H1 (cell line): ENCODE measurements at regions of chr5 and their contacts with region 1.

Region 1: DNA sequence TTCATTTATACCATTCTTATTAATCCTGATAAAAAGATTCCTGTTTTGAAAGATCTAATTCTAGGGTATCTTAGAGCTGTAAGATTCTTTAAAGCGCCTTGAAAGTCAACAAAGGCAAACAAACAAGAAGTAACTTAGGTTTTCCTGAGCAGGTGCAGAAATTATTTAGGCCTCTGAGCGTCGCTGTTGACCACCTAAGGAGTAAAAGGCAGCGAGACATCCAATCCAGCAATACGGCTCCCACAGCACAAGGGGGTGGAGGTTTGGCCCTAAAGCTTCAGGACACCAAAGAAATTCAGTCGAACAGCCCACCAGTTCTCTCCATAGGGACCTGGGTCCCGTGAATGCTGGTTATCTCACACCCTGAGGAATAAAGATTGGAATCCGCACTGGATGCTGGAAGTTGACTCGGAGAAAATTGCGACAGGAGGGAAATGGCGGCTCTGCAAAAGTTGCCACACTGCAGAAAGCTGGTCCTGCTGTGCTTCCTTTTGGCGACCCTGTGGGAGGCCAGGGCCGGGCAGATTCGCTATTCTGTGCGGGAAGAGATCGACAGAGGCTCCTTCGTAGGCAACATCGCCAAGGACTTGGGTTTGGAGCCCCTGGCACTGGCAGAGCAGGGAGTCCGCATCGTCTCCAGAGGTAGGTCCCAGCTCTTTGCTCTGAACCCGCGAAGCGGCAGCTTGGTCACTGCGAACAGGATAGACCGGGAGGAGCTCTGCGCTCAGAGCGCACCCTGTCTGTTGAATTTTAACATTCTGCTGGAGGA is at the start of gene PCDHGA2:
- DNase-seq: no peak
- H3K4me3 ChIP-seq: no peak within 1 kb of the TSS
- H3K27ac ChIP-seq: no peak within 1 kb of the TSS
- H3K4me1 ChIP-seq: no peaks in the 10 kb centered on the region
- H3K27me3 ChIP-seq: no peaks in the 10 kb centered on the region
- CTCF ChIP-seq: peak; percentile 10 to 77 (median 60)
- EP300 ChIP-seq: no peak
- POLR2A ChIP-seq: no peak
- RAD21 ChIP-seq: peak; percentile 58 to 65
- total RNA-seq, gene PCDHGA2: 0.31 and 0.32 TPM in 2 replicates

Region 2: DNA sequence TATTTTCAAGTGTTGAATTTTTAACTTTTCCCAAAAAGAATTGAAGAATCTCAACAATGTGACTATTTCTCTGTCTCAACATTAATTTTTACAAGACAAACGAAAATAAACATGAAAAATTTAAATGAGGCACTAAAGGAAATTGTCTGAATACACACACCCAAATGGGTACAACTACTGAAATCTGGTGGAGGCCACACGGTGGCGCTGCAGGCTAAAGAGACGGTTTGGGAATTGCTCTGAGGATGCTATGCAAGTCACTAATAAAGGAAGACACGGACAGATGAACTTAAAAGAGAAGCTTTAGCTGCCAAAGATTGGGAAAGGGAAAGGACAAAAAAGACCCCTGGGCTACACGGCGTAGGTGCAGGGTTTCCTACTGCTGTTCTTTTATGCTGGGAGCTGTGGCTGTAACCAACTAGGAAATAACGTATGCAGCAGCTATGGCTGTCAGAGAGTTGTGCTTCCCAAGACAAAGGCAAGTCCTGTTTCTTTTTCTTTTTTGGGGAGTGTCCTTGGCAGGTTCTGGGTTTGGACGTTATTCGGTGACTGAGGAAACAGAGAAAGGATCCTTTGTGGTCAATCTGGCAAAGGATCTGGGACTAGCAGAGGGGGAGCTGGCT is 146.5 kb before region 1 on chr5 and contains the start of gene PCDHB10:
- CTCF ChIA-PET with region 1: interaction called, 10 read pairs
- POLR2A ChIA-PET with region 1: no interaction called
- DNase-seq: peak in 1 of 2 experiments; percentile 92
- H3K4me3 ChIP-seq: peak within 1 kb of the TSS; percentile 14 to 46 (median 35); a peak in 6 of 8 replicates
- H3K27ac ChIP-seq: no peak within 1 kb of the TSS
- H3K4me1 ChIP-seq: no peaks in the 10 kb centered on the region; a peak in 1 of 7 replicates
- H3K27me3 ChIP-seq: no peaks in the 10 kb centered on the region
- CTCF ChIP-seq: peak; percentile 72 to 83 (median 83)
- EP300 ChIP-seq: no peak
- POLR2A ChIP-seq: no peak
- RAD21 ChIP-seq: peak; percentile 82 to 84
- total RNA-seq, gene PCDHB10: 1.8 and 1.9 TPM in 2 replicates

Region 3: DNA sequence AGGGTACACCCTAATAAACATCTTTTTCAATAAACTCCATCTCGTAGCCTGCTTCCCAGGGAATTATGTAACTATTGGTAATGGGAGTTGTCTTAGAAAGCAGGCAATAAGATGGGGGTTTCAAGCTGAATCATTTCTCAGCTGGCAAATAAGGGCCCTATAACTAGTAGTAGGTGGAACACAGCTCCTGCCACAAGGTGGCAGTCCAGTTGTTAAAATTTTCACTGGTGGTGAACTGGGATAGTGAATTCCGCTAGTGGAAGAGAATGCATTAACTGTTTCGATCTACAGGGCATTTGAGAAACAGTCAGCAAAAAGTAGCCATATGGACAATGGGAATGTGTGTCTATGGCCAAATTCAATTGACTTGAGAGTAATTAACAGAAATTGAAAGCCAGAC is 65.8 kb before region 1 on chr5:
- CTCF ChIA-PET with region 1: interaction called, 17 read pairs
- POLR2A ChIA-PET with region 1: no interaction called
- DNase-seq: peak; percentile 3 to 44
- H3K4me3 ChIP-seq: no peak overlapping the region
- H3K27ac ChIP-seq: no peak overlapping the region
- H3K4me1 ChIP-seq: no peaks in the 10 kb centered on the region
- H3K27me3 ChIP-seq: no peaks in the 10 kb centered on the region
- CTCF ChIP-seq: peak in 2 of 3 experiments; percentile 41 to 49; a peak in 2 of 4 replicates
- EP300 ChIP-seq: no peak
- POLR2A ChIP-seq: no peak
- RAD21 ChIP-seq: peak; percentile 37 to 49; a peak in 3 of 4 replicates

Region 4: GRCh38 chr5:141326088-141326854 is 12.5 kb before region 1 on chr5:
- CTCF ChIA-PET with region 1: interaction called, 40 read pairs
- POLR2A ChIA-PET with region 1: interaction called, 15 read pairs
- DNase-seq: peak in 1 of 2 experiments; percentile 73
- H3K4me3 ChIP-seq: peak overlapping the region; percentile 31 to 54 (median 50)
- H3K27ac ChIP-seq: no peak overlapping the region
- H3K4me1 ChIP-seq: no peaks in the 10 kb centered on the region
- H3K27me3 ChIP-seq: no peaks in the 10 kb centered on the region
- CTCF ChIP-seq: peak; percentile 58 to 74 (median 71)
- EP300 ChIP-seq: no peak
- POLR2A ChIP-seq: peak in 1 of 2 experiments; percentile 56; a peak in 1 of 3 replicates
- RAD21 ChIP-seq: peak; percentile 47 to 63

Region 5: DNA sequence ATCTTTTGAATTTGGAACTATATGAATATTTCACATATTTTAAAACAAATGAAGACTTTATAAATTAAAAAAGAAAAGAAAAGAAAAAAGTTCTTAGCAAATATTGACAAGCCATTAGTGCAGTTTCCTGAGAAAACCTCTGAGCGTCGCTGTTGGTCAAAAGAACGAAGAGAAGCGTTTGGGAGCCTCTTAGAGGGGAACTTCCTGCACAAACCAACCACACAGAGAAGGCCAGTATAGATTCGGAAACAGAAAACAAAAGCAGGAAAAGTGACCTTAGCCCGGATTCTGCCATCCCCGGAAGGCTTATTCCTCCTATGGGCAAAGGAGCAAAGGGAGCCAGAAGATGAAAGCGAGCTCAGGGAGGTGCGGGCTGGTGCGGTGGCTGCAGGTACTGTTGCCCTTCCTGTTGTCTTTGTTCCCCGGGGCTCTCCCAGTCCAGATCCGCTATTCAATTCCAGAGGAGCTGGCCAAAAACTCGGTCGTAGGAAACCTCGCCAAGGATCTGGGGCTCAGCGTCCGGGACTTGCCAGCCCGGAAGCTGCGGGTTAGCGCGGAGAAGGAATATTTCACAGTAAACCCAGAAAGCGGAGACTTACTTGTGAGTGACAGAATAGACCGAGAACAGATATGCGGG is 21.2 kb after region 1 on chr5 and contains the start of gene PCDHGB2:
- CTCF ChIA-PET with region 1: interaction called, 14 read pairs
- POLR2A ChIA-PET with region 1: no interaction called
- DNase-seq: no peak
- H3K4me3 ChIP-seq: peak within 1 kb of the TSS in 1 of 4 experiments; percentile 33; a peak in 1 of 8 replicates
- H3K27ac ChIP-seq: no peak within 1 kb of the TSS
- H3K4me1 ChIP-seq: peaks cover 0 to 3% (median under 1%) of the 10 kb centered on the region in 4 experiments; a peak in 1 of 7 replicates
- H3K27me3 ChIP-seq: no peaks in the 10 kb centered on the region
- CTCF ChIP-seq: peak in 2 of 3 experiments; percentile 60 to 74; a peak in 3 of 4 replicates
- EP300 ChIP-seq: no peak
- POLR2A ChIP-seq: no peak
- RAD21 ChIP-seq: peak; percentile 78 to 82
- total RNA-seq, gene PCDHGB2: 2.8 and 2.9 TPM in 2 replicates

Region 6: DNA sequence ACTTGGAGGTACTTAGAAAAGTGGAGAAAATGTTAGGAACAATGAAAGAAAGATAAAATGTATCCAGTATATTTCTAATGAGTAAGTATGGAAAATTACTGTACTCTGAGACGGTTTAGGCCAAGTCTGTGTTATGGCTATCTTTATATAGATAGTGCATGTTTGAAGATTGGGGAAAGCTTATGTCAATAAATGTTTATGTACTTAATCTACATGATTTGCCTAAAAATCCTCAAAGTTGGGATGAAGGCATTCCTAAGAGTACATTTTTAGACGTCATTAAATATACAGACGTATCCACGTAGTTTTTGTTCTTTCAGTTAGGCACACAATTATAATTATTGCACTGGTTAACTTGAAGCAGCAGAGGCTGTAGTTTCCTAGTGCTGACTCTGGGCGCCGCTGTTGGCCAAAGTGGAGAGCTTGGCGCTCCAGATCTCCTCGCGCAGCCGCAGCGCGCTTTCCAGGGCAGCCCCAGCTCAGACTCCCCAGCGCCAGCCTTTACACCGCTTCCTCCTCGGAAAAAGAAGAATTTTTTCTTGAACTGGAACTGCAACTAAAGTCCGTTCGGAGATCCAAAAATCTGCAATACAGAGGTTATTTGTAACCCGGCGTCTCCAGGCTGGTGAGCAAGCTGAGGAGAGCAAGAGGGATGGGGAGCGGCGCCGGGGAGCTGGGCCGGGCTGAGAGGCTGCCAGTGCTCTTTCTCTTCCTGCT is 48.7 kb after region 1 on chr5 and contains the start of gene PCDHGB4:
- CTCF ChIA-PET with region 1: interaction called, 16 read pairs
- POLR2A ChIA-PET with region 1: no interaction called
- DNase-seq: peak in 1 of 2 experiments; percentile 82
- H3K4me3 ChIP-seq: peak within 1 kb of the TSS; percentile 42 to 69 (median 44); a peak in 7 of 8 replicates
- H3K27ac ChIP-seq: no peak within 1 kb of the TSS
- H3K4me1 ChIP-seq: no peaks in the 10 kb centered on the region
- H3K27me3 ChIP-seq: no peaks in the 10 kb centered on the region; a peak in 1 of 7 replicates
- CTCF ChIP-seq: peak; percentile 56 to 66 (median 65)
- EP300 ChIP-seq: no peak
- POLR2A ChIP-seq: no peak
- RAD21 ChIP-seq: peak; percentile 59 to 67
- total RNA-seq, gene PCDHGB4: 7.8 and 9.1 TPM in 2 replicates

Region 7: GRCh38 chr5:141524604-141525597 is 186.2 kb after region 1 on chr5:
- CTCF ChIA-PET with region 1: interaction called, 15 read pairs
- POLR2A ChIA-PET with region 1: no interaction called
- DNase-seq: peak; percentile 90 to 95
- H3K4me3 ChIP-seq: no peak overlapping the region
- H3K27ac ChIP-seq: peak overlapping the region; percentile 26; the same call in 1 of the 2 replicates
- H3K4me1 ChIP-seq: peaks cover 2 to 15% (median 8%) of the 10 kb centered on the region in 4 experiments; a peak in 6 of 7 replicates
- H3K27me3 ChIP-seq: no peaks in the 10 kb centered on the region
- CTCF ChIP-seq: peak; percentile 99 to 100 (median 99)
- EP300 ChIP-seq: peak in 1 of 2 experiments; percentile 68; a peak in 1 of 3 replicates
- POLR2A ChIP-seq: no peak
- RAD21 ChIP-seq: peak; percentile 90 to 91

Region 8: GRCh38 chr5:141771031-141771430 is 432.3 kb after region 1 on chr5:
- CTCF ChIA-PET with region 1: no interaction called
- POLR2A ChIA-PET with region 1: no interaction called
- DNase-seq: no peak
- H3K4me3 ChIP-seq: no peak overlapping the region
- H3K27ac ChIP-seq: no peak overlapping the region
- H3K4me1 ChIP-seq: peaks cover 0 to 7% (median 3%) of the 10 kb centered on the region in 4 experiments; a peak in 5 of 7 replicates
- H3K27me3 ChIP-seq: no peaks in the 10 kb centered on the region; a peak in 1 of 7 replicates
- CTCF ChIP-seq: no peak
- EP300 ChIP-seq: no peak
- POLR2A ChIP-seq: no peak
- RAD21 ChIP-seq: no peak